Activated naive CD4-positive, alpha-beta T cell treated with anti-CD3 and anti-CD28 coated beads for 36 hours (primary cell): ENCODE measurements at regions of chr1 and their contacts with region 1.

Region 1: DNA sequence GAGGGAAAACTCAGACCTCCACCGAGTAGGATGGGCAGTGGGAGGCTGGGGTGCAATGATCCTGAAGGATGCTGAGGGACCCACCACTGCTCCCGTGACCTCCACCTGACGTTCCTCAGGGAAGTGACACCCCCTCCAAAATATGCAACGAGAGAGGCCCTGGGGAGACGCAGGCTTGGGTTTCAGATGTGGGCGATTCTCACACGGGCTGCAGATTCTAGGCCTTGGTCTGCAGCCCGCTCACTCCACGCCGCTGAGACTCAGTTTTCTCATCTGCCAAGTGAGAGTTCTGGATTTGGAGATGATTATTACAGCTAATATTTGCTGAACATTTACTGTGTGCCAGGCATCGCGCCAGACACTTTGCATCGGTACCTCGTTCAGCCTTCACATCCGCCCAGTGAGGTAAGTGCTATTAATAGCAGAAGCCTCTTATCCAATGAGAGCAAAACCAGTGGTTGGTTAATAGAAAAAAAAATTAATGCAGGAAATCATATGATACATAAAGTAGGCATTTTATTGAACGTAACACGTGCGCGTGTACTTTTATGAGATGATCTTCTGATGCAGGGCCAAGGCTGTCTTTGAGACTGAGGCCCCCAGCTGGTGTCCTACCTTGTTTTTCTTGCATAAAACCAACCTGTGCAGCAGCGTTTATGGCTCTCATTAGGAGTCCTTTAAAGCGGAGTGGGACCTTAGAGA is 102.0 kb upstream of the RUNX3 start:
- DNase-seq: peak; percentile 70
- H3K4me3 Mint-ChIP-seq: peak overlapping the region; percentile 81
- H3K27ac Mint-ChIP-seq: peak overlapping the region; percentile 99
- H3K4me1 Mint-ChIP-seq: peaks cover 75% of the 10 kb centered on the region
- H3K27me3 Mint-ChIP-seq: no peaks in the 10 kb centered on the region

Region 2: GRCh38 chr1:24536391-24536840 is 495.7 kb before region 1 on chr1:
- CTCF ChIA-PET with region 1: no interaction called
- intact Hi-C with region 1: loop called (anchors 5 kb)
- DNase-seq: peak; percentile 84
- H3K4me3 Mint-ChIP-seq: peak overlapping the region; percentile 67
- H3K27ac Mint-ChIP-seq: peak overlapping the region; percentile 97
- H3K4me1 Mint-ChIP-seq: peaks cover 84% of the 10 kb centered on the region
- H3K27me3 Mint-ChIP-seq: no peaks in the 10 kb centered on the region

Region 3: GRCh38 chr1:24930204-24931145 is 101.6 kb before region 1 on chr1 and contains the start of gene RUNX3:
- CTCF ChIA-PET with region 1: interaction called, 144 read pairs
- intact Hi-C with region 1: loop called (anchors 1 kb)
- DNase-seq: peak; percentile 93
- H3K4me3 Mint-ChIP-seq: peak within 1 kb of the TSS; percentile 94
- H3K27ac Mint-ChIP-seq: peak within 1 kb of the TSS; percentile 92
- H3K4me1 Mint-ChIP-seq: peaks cover 66% of the 10 kb centered on the region
- H3K27me3 Mint-ChIP-seq: no peaks in the 10 kb centered on the region
- total RNA-seq, gene RUNX3: 72.3 to 83.8 TPM

Region 4: DNA sequence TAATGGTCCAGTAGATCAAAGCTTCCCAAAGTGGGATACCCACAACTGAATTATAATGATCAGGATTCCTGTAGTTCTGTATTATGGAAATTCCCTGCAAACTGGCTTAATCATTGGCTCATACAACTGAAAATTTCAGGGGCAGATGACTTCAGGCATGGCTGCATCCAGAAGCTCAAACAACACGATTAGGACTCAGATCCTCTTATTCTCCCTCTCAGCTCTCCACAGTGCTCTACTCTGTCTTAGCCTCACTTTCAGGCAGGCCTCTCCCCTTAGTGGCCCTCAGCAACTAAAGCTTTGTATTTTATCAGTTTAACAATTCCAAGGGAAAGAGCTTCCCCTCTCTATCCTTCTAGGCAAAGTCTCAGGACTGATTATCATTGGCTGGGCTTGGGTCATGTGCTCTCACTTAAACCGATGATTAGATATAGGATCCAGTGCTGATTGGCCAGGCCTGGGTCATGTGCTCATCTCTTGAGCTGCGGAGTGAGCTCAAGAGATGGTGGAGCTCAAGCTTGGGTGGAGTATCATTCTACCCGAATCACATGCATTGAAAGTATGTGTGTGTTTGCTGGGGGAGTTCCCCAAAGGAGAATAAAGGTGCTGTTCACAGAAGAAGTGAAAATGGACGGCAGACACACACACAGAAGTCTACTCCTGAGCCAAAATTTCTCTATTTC is 44.1 kb before region 1 on chr1:
- CTCF ChIA-PET with region 1: interaction called, 10 read pairs
- intact Hi-C with region 1: loop called (anchors 1 kb)
- DNase-seq: peak; percentile 73
- H3K4me3 Mint-ChIP-seq: no peak overlapping the region
- H3K27ac Mint-ChIP-seq: peak overlapping the region; percentile 84
- H3K4me1 Mint-ChIP-seq: peaks cover 95% of the 10 kb centered on the region
- H3K27me3 Mint-ChIP-seq: no peaks in the 10 kb centered on the region

Region 5: GRCh38 chr1:25566730-25567341 is 534.7 kb after region 1 on chr1:
- CTCF ChIA-PET with region 1: no interaction called
- intact Hi-C with region 1: loop called (anchors 5 kb)
- DNase-seq: peak; percentile 54
- H3K4me3 Mint-ChIP-seq: no peak overlapping the region
- H3K27ac Mint-ChIP-seq: peak overlapping the region; percentile 83
- H3K4me1 Mint-ChIP-seq: peaks cover 81% of the 10 kb centered on the region
- H3K27me3 Mint-ChIP-seq: no peaks in the 10 kb centered on the region